ENCODE measurements at regions of chr3 and their contacts with region 1.

Region 1: DNA sequence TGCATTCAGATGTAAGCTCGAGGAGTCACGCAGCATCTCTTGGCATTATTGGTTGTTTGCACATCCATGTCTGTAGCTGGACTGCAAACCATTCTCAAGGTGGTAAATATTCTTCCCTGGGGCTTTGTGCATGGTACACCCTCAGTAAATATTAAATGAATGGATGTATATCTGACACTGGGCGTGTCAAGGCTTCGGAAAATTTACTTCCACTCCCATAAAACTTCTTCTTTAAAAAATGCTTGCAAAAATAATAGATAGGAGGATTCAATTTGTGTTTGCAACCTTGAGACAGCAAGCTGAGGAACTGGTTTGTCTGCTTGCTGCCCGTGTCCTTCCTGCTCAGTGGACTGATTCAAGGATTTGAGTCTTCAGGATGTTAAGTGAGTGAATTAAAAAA is 453.8 kb downstream of the FGF12 start:
- DNase-seq: no peak
- H3K4me3 ChIP-seq: no peak overlapping the region
- H3K27ac ChIP-seq: no peak overlapping the region
- H3K4me1 ChIP-seq: no peaks in the 10 kb centered on the region
- H3K27me3 ChIP-seq: no peaks in the 10 kb centered on the region
- CTCF ChIP-seq: no peak
- EP300 ChIP-seq: no peak
- POLR2A ChIP-seq: no peak

Region 2: GRCh38 chr3:192054881-192055280 is 218.6 kb before region 1 on chr3:
- in situ Hi-C with region 1: no loop called
- intact Hi-C with region 1: no loop called
- DNase-seq: no peak
- H3K4me3 ChIP-seq: no peak overlapping the region
- H3K27ac ChIP-seq: no peak overlapping the region
- H3K4me1 ChIP-seq: no peaks in the 10 kb centered on the region
- H3K27me3 ChIP-seq: no peaks in the 10 kb centered on the region
- CTCF ChIP-seq: no peak
- EP300 ChIP-seq: no peak
- POLR2A ChIP-seq: no peak

Region 3: GRCh38 chr3:192216067-192216466 is 57.4 kb before region 1 on chr3:
- in situ Hi-C with region 1: loop called in 1 of 4 experiments (anchors 5 kb)
- intact Hi-C with region 1: loop called (anchors 2 kb)
- DNase-seq: no peak
- H3K4me3 ChIP-seq: no peak overlapping the region
- H3K27ac ChIP-seq: no peak overlapping the region
- H3K4me1 ChIP-seq: no peaks in the 10 kb centered on the region
- H3K27me3 ChIP-seq: no peaks in the 10 kb centered on the region
- CTCF ChIP-seq: no peak
- EP300 ChIP-seq: no peak
- POLR2A ChIP-seq: no peak